ENCODE measurements at regions of chr2 and their contacts with region 1.

Region 1: DNA sequence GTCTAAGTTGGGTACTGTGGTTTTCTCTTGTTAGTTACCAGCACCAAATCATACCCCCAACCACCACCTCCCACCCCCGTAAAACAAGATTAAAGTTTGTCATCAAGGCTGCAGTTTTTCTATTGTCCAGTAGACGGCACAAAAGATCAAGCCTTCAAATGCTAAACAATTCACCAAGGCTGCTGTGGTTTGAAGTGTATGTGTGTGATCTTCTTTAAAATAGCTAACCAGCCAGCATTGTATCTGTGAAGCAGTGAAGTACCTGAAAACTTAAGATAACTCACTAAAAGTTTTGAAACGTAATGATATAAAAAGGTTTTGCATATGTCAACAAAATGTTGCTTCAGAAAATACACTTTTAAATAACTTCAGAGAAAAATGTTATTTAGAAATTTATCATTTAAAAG is 5.9 kb upstream of the MEIS1 start:
- DNase-seq: peak in 1 of 2 experiments; percentile 27
- H3K4me3 ChIP-seq: no peak overlapping the region
- H3K27ac ChIP-seq: no peak overlapping the region
- H3K4me1 ChIP-seq: no peaks in the 10 kb centered on the region
- H3K27me3 ChIP-seq: no peaks in the 10 kb centered on the region
- CTCF ChIP-seq: peak; percentile 96

Region 2: GRCh38 chr2:66567729-66568128 is 138.7 kb after region 1 on chr2:
- CTCF ChIA-PET with region 1: interaction called, 17 read pairs
- POLR2A ChIA-PET with region 1: no interaction called
- intact Hi-C with region 1: no loop called
- DNase-seq: no peak
- H3K4me3 ChIP-seq: no peak overlapping the region
- H3K27ac ChIP-seq: no peak overlapping the region
- H3K4me1 ChIP-seq: no peaks in the 10 kb centered on the region
- H3K27me3 ChIP-seq: no peaks in the 10 kb centered on the region
- CTCF ChIP-seq: no peak

Region 3: DNA sequence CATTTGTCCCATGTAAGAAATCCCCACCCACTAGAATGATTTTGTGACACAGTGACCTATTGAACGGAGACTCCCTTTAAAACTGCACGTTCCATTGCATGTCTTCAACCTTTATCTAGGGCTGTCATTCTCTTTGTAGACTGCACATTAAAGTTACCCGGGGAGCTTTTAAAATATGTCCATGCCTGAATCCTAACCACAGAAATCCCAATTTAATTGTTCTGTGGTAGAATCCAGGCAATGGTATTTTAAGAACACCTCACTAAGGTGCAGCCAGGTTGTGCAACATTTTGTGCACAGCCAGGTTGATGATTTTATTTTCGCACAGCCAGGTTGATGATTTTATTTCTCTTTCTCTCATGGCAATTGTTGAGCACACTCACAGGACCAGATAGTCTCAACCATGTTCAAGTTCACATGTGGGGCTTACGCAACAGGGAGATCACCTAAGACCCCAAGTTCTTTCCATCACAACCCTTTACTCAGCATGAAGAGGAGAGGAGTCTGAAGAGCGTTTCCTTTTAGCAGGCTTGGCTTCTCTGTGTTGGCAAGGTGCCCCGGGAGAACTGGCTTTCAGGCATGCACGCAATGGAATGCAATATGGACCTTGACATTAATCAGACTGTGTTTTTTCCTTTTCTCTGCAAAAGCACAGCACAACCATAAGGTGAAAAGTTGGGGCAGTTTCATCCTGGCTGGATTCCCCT is 500.7 kb after region 1 on chr2:
- CTCF ChIA-PET with region 1: no interaction called
- POLR2A ChIA-PET with region 1: no interaction called
- intact Hi-C with region 1: loop called (anchors 10 kb)
- DNase-seq: peak; percentile 46 to 80
- H3K4me3 ChIP-seq: peak overlapping the region; percentile 16; the same call in 1 of the 2 replicates
- H3K27ac ChIP-seq: peak overlapping the region; percentile 60
- H3K4me1 ChIP-seq: peaks cover 11% of the 10 kb centered on the region
- H3K27me3 ChIP-seq: no peaks in the 10 kb centered on the region
- CTCF ChIP-seq: no peak

Region 4: GRCh38 chr2:67476809-67477790 is 1048.0 kb after region 1 on chr2:
- CTCF ChIA-PET with region 1: no interaction called
- POLR2A ChIA-PET with region 1: no interaction called
- intact Hi-C with region 1: loop called (anchors 2 kb)
- DNase-seq: peak in 1 of 2 experiments; percentile 50
- H3K4me3 ChIP-seq: no peak overlapping the region
- H3K27ac ChIP-seq: no peak overlapping the region
- H3K4me1 ChIP-seq: no peaks in the 10 kb centered on the region
- H3K27me3 ChIP-seq: no peaks in the 10 kb centered on the region
- CTCF ChIP-seq: peak; percentile 84

Region 5: DNA sequence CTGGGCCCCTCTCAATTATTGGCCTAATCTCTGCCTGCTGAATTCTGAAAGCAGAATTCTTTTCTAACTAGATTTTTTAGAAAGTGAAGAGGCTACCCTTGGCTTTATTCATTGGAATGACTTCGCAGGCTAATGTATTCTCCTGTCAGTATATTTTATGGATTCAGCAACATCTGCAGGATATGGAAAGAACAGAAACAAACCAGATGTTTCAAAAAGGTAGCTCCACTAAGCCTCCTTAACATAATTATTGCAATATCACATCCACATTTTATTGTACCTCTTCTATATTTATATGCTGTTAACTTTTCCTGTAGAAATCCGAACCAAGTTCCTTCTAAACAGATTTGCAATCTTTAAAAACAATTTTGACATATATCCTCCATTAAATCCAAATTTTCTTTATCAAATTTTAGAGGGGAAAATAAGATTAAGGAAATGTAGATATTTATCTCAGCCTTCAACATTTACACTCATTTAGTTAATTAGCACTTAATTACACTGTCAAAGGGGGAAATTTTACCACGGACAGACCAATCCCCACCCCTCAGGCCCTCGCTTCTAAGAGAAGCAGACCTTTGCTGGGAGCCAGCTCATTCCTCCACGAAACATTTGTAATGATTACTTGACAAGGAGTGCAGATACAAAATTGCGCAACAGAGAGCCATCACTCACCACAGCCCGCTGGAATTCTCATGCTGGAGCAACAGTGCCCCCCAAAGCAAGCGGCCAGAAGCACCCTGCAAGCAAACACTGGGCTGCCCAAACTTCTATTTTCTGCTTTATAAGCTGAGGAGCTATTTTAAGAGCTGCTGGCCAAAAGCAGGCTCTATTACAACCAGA is 1221.4 kb after region 1 on chr2:
- CTCF ChIA-PET with region 1: no interaction called
- POLR2A ChIA-PET with region 1: no interaction called
- intact Hi-C with region 1: loop called (anchors 10 kb)
- DNase-seq: peak in 1 of 2 experiments; percentile 32
- H3K4me3 ChIP-seq: no peak overlapping the region
- H3K27ac ChIP-seq: no peak overlapping the region
- H3K4me1 ChIP-seq: no peaks in the 10 kb centered on the region
- H3K27me3 ChIP-seq: no peaks in the 10 kb centered on the region
- CTCF ChIP-seq: peak; percentile 68